Caco-2 (cell line): ENCODE measurements at regions of chr11 and their contacts with region 1.

Region 1: GRCh38 chr11:102780491-102780918 is at the start of gene MMP10:
- DNase-seq: peak in 1 of 2 experiments; percentile 60
- H3K4me3 ChIP-seq: no peak within 1 kb of the TSS
- H3K4me3 Mint-ChIP-seq: no peak within 1 kb of the TSS
- H3K27ac Mint-ChIP-seq: no peak within 1 kb of the TSS
- H3K4me1 ChIP-seq: 0 out of 2 replicates have a peak, but pooled peaks cover 5% of the 10 kb centered on the region
- H3K4me1 Mint-ChIP-seq: peaks cover 15% of the 10 kb centered on the region
- H3K27me3 ChIP-seq: no peaks in the 10 kb centered on the region
- H3K27me3 Mint-ChIP-seq: no peaks in the 10 kb centered on the region
- CTCF ChIP-seq: peak; percentile 75 to 84
- total RNA-seq, gene MMP10: 0.16 and 1.1 TPM in 2 replicates

Region 2: DNA sequence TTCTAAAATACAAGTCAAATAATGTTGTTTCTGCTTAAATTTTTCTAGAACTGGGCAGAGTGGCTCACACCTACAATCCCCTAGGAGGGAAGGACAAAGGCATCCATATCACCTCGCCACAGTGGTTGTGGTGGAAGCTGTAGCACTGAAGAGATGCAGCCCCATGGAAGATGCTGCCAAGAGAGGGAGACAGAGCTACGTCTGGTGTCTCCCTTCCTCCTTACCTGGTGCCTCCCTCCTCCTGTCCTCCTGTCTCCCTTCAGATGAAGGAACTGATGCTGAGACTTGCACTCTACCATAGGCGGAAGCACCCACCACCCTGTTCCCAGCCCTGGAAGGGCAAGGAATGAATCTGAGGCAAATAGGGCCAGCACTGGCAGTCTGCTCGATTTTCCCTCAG is 97.2 kb before region 1 on chr11:
- CTCF ChIA-PET with region 1: no interaction called
- POLR2A ChIA-PET with region 1: no interaction called
- intact Hi-C with region 1: loop called (anchors 1 kb)
- DNase-seq: peak; percentile 47 to 63
- H3K4me3 ChIP-seq: no peak overlapping the region
- H3K4me3 Mint-ChIP-seq: no peak overlapping the region
- H3K27ac Mint-ChIP-seq: no peak overlapping the region
- H3K4me1 ChIP-seq: no peaks in the 10 kb centered on the region
- H3K4me1 Mint-ChIP-seq: no peaks in the 10 kb centered on the region
- H3K27me3 ChIP-seq: peaks cover 2% of the 10 kb centered on the region
- H3K27me3 Mint-ChIP-seq: peaks cover 10% of the 10 kb centered on the region
- CTCF ChIP-seq: peak; percentile 40 to 53

Region 3: DNA sequence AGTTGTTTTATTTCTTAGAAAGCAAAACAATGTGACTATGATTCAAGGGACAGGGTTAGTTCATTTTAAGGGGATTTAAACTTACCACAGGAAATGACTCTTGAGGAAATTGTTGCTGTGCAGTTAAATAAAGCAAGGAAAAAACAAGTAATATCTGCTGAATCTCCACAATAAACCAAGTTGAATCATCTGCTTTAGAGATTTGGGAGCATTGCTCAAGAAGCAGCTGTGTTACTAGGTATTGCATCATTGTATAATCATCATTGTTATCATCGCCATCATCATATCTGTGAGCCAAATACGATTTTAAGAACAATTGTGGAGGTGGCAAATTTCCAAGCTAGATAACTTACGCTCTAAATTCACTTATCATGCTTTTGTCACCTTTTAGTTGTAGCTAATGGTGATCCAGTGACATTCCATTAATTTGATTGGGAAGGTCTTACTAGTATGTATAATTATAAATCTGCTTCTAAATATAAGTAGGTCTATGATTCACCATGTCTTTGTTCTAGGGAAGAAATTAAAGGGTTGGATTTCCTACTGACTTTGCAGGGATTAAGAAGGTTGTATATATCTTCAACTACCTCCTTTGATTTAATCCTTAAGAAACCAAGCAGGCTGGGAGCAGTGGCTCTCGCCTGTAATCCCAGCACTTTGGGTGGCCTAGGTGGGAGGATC is 20.0 kb before region 1 on chr11:
- CTCF ChIA-PET with region 1: interaction called, 9 read pairs
- POLR2A ChIA-PET with region 1: no interaction called
- intact Hi-C with region 1: loop called (anchors 1 kb)
- DNase-seq: peak in 1 of 2 experiments; percentile 33
- H3K4me3 ChIP-seq: no peak overlapping the region
- H3K4me3 Mint-ChIP-seq: no peak overlapping the region
- H3K27ac Mint-ChIP-seq: peak overlapping the region; percentile 15
- H3K4me1 ChIP-seq: peaks cover 63% of the 10 kb centered on the region
- H3K4me1 Mint-ChIP-seq: peaks cover 51% of the 10 kb centered on the region
- H3K27me3 ChIP-seq: no peaks in the 10 kb centered on the region
- H3K27me3 Mint-ChIP-seq: no peaks in the 10 kb centered on the region
- CTCF ChIP-seq: no peak

Region 4: DNA sequence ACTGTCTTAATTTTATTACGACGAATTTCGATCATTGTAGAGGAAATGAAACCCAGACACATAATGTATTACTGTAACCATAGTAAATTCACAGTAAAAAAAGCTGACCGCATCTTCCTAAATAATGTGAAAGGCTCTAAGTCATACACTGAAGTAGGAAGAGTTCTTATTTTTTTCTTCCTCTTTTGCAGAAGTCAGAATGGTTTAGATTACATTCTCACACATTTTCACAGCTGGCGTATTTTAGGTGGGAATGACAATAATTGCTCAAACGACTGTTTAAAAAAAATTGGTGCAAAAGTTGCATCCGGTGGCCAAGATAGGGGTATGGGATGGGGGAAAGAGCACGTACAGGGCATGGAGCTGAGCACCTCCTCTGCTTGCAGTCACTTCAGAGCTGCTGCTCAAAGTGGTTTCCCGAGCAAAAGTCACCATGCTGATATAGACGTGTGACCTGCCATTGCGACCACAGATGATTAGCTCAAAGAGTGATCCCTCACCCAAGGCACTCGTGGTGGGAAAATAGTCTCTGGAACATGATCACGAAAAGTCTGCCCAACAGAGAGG is 139.7 kb after region 1 on chr11:
- CTCF ChIA-PET with region 1: no interaction called
- POLR2A ChIA-PET with region 1: no interaction called
- intact Hi-C with region 1: no loop called
- DNase-seq: no peak
- H3K4me3 ChIP-seq: no peak overlapping the region
- H3K4me3 Mint-ChIP-seq: no peak overlapping the region
- H3K27ac Mint-ChIP-seq: no peak overlapping the region
- H3K4me1 ChIP-seq: no peaks in the 10 kb centered on the region
- H3K4me1 Mint-ChIP-seq: no peaks in the 10 kb centered on the region
- H3K27me3 ChIP-seq: no peaks in the 10 kb centered on the region
- H3K27me3 Mint-ChIP-seq: no peaks in the 10 kb centered on the region
- CTCF ChIP-seq: no peak